ENCODE measurements at regions of chr22 and their contacts with region 1.

Region 1: GRCh38 chr22:41381329-41382097 is at the start of gene TEF:
- DNase-seq: peak; percentile 95
- ATAC-seq: peak; percentile 89
- H3K4me3 ChIP-seq: peak within 1 kb of the TSS; percentile 52 to 65
- H3K27ac ChIP-seq: peak within 1 kb of the TSS; percentile 97
- H3K4me1 ChIP-seq: peaks cover 14 to 38% of the 10 kb centered on the region in 2 experiments
- H3K27me3 ChIP-seq: no peaks in the 10 kb centered on the region
- CTCF ChIP-seq: no peak
- POLR2A ChIP-seq: peak; percentile 4
- RAD21 ChIP-seq: no peak
- total RNA-seq, gene TEF: 16.5 TPM

Region 2: GRCh38 chr22:41091132-41092022 is 290.1 kb before region 1 on chr22:
- CTCF ChIA-PET with region 1: no interaction called
- POLR2A ChIA-PET with region 1: no interaction called
- RAD21 ChIA-PET with region 1: no interaction called
- intact Hi-C with region 1: loop called (anchors 2 kb)
- DNase-seq: peak; percentile 95
- ATAC-seq: peak; percentile 92
- H3K4me3 ChIP-seq: peak overlapping the region; percentile 71 to 72
- H3K27ac ChIP-seq: peak overlapping the region; percentile 100
- H3K4me1 ChIP-seq: peaks cover 13 to 26% of the 10 kb centered on the region in 2 experiments; a peak in 3 of 4 replicates
- H3K27me3 ChIP-seq: no peaks in the 10 kb centered on the region
- CTCF ChIP-seq: no peak
- POLR2A ChIP-seq: no peak
- RAD21 ChIP-seq: peak; percentile 34; the same call in 1 of the 2 replicates

Region 3: DNA sequence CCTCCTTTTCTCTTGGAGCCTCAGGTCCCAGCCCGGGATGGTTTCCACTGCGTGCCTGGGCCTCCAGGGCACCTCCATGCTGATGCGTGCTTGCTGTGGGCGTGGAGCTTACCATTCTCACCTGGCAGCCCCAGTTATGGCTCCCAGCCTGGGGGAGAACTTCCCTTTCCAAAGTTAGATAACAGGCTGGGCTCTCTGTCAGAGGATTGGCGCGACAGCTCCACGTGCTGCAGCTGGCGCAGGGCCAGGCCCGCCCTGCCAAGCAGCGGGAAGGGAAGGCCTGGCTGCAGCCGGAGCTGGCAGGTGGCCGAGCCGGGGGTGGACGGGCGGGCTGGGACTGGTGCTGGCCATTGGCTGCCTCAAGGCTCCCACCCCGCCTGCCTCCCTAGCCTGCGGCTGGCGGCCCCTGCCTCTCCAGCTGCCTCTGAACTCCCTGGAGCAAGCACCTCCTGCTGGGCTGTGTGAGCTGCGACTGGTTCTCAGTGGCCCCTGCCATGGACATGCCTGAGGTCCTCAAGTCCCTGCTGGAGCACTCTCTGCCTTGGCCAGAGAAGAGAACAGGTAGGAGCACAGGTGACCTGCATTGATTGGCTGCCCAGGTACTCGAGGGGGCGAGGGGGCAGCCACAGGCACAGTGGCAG is 14.4 kb before region 1 on chr22:
- CTCF ChIA-PET with region 1: interaction called, 4 read pairs
- POLR2A ChIA-PET with region 1: interaction called, 16 read pairs
- RAD21 ChIA-PET with region 1: interaction called in 1 of 2 experiments, 4 read pairs
- intact Hi-C with region 1: no loop called
- DNase-seq: peak; percentile 71
- ATAC-seq: peak; percentile 93
- H3K4me3 ChIP-seq: peak overlapping the region in 1 of 2 experiments; percentile 37; a peak in 3 of 4 replicates
- H3K27ac ChIP-seq: peak overlapping the region; percentile 20; the same call in 1 of the 2 replicates
- H3K4me1 ChIP-seq: peaks cover 17 to 18% of the 10 kb centered on the region in 2 experiments
- H3K27me3 ChIP-seq: no peaks in the 10 kb centered on the region
- CTCF ChIP-seq: peak in 2 of 3 experiments; percentile 23 to 26; a peak in 1 of 6 replicates
- POLR2A ChIP-seq: no peak
- RAD21 ChIP-seq: no peak; the same call in 1 of the 2 replicates

Region 4: DNA sequence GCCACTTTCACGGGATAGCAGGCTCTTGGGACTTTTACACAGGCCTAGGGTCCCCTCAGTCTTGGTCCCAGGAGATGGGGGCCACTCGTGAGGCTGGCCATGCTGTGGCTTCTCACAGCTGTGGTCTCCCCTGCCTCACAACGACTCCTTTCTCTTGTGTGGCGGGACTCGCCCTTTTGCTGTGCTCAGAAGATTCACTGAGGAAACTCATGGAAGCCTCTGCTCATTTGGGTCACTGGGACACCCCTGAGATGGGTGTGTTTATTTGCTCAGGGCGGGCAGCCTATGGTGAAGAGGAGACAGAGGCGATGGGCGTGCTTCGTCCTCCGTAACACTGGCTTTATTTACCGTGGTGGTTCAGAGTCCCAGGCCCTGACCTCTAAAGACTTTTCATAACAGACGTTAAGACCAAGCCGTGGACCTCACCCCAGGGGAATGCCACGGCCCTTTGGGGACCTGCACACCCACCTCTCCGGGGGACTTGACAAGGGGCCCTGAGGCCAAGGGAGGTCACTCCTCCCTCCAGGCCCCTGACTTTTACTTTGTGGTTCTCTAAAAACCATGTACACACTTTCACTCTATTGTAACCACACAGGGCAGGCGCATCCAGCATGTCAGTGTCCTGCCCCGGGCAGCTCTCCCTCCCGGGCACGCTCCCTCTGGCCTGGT is 15.8 kb after region 1 on chr22:
- CTCF ChIA-PET with region 1: interaction called, 3 read pairs
- POLR2A ChIA-PET with region 1: interaction called, 14 read pairs
- RAD21 ChIA-PET with region 1: no interaction called
- intact Hi-C with region 1: no loop called
- DNase-seq: no peak
- ATAC-seq: no peak
- H3K4me3 ChIP-seq: no peak overlapping the region
- H3K27ac ChIP-seq: no peak overlapping the region
- H3K4me1 ChIP-seq: peaks cover 7 to 8% of the 10 kb centered on the region in 2 experiments
- H3K27me3 ChIP-seq: no peaks in the 10 kb centered on the region
- CTCF ChIP-seq: no peak
- POLR2A ChIP-seq: no peak
- RAD21 ChIP-seq: no peak

Region 5: GRCh38 chr22:41403532-41404318 is 22.2 kb after region 1 on chr22:
- CTCF ChIA-PET with region 1: interaction called, 11 read pairs
- POLR2A ChIA-PET with region 1: interaction called, 9 read pairs
- RAD21 ChIA-PET with region 1: interaction called in 1 of 2 experiments, 6 read pairs
- intact Hi-C with region 1: no loop called
- DNase-seq: peak; percentile 81
- ATAC-seq: peak; percentile 98
- H3K4me3 ChIP-seq: no peak overlapping the region
- H3K27ac ChIP-seq: no peak overlapping the region
- H3K4me1 ChIP-seq: peaks cover 11 to 19% of the 10 kb centered on the region in 2 experiments
- H3K27me3 ChIP-seq: no peaks in the 10 kb centered on the region
- CTCF ChIP-seq: peak; percentile 91 to 96 (median 94)
- POLR2A ChIP-seq: no peak
- RAD21 ChIP-seq: peak; percentile 99

Region 6: GRCh38 chr22:41448189-41448808 is 66.8 kb after region 1 on chr22:
- CTCF ChIA-PET with region 1: no interaction called
- POLR2A ChIA-PET with region 1: interaction called, 20 read pairs
- RAD21 ChIA-PET with region 1: no interaction called
- intact Hi-C with region 1: no loop called
- DNase-seq: peak; percentile 99
- ATAC-seq: peak; percentile 80
- H3K4me3 ChIP-seq: peak overlapping the region; percentile 93 to 94
- H3K27ac ChIP-seq: peak overlapping the region; percentile 100
- H3K4me1 ChIP-seq: peaks cover 5 to 29% of the 10 kb centered on the region in 2 experiments; a peak in 3 of 4 replicates
- H3K27me3 ChIP-seq: no peaks in the 10 kb centered on the region
- CTCF ChIP-seq: no peak
- POLR2A ChIP-seq: peak; percentile 37
- RAD21 ChIP-seq: no peak

Region 7: GRCh38 chr22:41501209-41501608 is 119.7 kb after region 1 on chr22:
- CTCF ChIA-PET with region 1: no interaction called
- POLR2A ChIA-PET with region 1: no interaction called
- RAD21 ChIA-PET with region 1: no interaction called
- intact Hi-C with region 1: no loop called
- DNase-seq: no peak
- ATAC-seq: peak; percentile 94
- H3K4me3 ChIP-seq: no peak overlapping the region
- H3K27ac ChIP-seq: no peak overlapping the region
- H3K4me1 ChIP-seq: no peaks in the 10 kb centered on the region
- H3K27me3 ChIP-seq: no peaks in the 10 kb centered on the region
- CTCF ChIP-seq: peak; percentile 18 to 48 (median 36); a peak in 5 of 6 replicates
- POLR2A ChIP-seq: no peak
- RAD21 ChIP-seq: peak; percentile 68

Region 8: DNA sequence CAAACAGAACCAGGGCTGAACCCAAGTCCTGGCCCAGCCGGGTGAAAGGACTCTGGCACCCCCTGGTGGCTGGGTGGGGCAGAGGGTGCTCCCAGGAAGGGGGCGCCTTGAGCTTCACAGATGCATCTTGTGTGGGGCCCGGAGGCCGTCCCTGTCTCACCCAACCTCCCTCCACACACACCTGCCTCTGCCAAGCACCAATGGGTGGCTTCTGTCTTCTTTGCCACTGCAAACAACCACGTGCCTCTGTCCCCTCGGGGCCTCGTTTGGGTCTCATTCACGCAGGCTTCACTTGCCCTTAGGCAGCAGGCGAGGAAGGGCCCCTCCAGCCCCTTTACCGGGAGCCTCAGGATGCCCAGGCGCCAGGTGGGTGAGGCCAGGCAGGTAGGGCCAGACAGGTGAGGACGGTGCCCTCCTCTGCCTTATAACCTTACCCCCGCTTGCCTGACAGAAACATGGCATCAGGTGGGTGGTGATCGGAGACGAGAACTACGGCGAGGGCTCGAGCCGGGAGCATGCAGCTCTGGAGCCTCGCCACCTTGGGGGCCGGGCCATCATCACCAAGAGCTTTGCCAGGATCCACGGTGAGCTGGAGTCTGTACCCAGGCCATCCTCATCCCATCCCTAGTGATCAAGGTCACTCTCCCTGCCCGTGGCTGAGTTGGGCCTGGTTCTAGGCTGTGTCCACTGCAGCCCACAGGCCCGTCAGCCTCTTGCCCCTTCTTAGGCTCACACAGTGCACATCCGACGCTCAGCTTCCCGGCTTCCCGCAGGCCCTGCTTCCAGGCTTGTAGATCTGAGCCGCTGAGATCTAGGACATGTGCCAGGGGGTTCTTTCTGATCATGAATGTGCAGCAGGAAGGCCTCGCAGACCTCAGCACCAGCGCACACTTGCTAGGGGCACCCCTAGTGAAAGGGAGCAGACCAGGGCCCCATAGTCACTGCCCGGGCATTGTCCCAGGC is 145.6 kb after region 1 on chr22:
- CTCF ChIA-PET with region 1: interaction called, 10 read pairs
- POLR2A ChIA-PET with region 1: interaction called, 9 read pairs
- RAD21 ChIA-PET with region 1: no interaction called
- intact Hi-C with region 1: no loop called
- DNase-seq: no peak
- ATAC-seq: peak; percentile 65
- H3K4me3 ChIP-seq: no peak overlapping the region
- H3K27ac ChIP-seq: peak overlapping the region; percentile 55; the same call in 1 of the 2 replicates
- H3K4me1 ChIP-seq: no peaks in the 10 kb centered on the region
- H3K27me3 ChIP-seq: no peaks in the 10 kb centered on the region
- CTCF ChIP-seq: peak; percentile 86 to 95 (median 92)
- POLR2A ChIP-seq: no peak
- RAD21 ChIP-seq: peak; percentile 72

Region 9: DNA sequence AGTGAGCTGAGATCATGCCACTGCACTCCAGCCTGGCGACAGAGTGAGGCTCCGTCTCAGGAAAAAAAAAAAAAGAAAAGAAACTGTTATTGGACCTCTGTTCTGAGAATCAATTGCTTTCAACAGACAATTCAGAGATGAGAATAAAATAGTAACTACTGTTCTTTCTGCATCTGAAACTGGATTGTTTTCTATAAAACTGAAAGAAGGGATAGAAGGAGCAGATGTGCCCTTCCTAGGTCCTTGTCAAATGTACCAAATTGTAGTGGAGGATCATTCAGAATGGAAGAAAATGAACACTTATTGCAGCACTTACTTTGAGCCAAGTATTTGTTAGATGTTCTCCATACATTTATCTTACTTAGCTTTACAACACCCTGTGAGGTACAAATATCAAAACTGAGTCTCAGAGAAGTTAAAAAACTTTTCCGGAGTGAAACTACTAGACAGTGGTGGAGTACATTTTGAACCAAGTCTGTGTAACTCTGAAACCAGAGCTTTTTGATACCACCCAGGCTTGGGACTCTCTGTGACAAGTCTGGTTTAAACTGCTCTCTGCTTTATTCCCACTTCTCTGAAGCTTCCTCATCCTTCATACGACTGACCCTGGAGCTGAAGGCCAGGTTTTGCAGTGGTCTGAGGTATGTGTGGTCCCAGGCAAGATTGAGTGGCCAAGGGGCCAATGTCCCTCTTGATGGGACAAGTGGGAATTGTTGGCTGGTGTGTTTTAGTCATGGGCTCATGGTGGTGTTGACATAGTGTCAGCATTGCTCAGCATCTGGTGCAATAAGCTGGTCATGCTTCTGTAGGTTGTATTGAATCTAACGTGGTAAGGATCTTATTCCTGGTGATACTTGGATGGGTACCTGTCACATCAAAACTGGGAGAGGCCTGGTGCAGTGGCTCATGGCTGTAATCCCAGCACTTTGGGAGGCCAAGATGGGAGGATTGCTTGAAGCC is 370.8 kb after region 1 on chr22:
- CTCF ChIA-PET with region 1: no interaction called
- POLR2A ChIA-PET with region 1: no interaction called
- RAD21 ChIA-PET with region 1: no interaction called
- intact Hi-C with region 1: no loop called
- DNase-seq: no peak
- ATAC-seq: no peak
- H3K4me3 ChIP-seq: no peak overlapping the region
- H3K27ac ChIP-seq: no peak overlapping the region
- H3K4me1 ChIP-seq: no peaks in the 10 kb centered on the region; a peak in 1 of 4 replicates
- H3K27me3 ChIP-seq: no peaks in the 10 kb centered on the region
- CTCF ChIP-seq: no peak
- POLR2A ChIP-seq: no peak
- RAD21 ChIP-seq: no peak

Region 10: GRCh38 chr22:41876275-41876674 is 494.8 kb after region 1 on chr22:
- CTCF ChIA-PET with region 1: no interaction called
- POLR2A ChIA-PET with region 1: no interaction called
- RAD21 ChIA-PET with region 1: no interaction called
- intact Hi-C with region 1: no loop called
- DNase-seq: no peak
- ATAC-seq: no peak
- H3K4me3 ChIP-seq: no peak overlapping the region
- H3K27ac ChIP-seq: no peak overlapping the region
- H3K4me1 ChIP-seq: no peaks in the 10 kb centered on the region
- H3K27me3 ChIP-seq: no peaks in the 10 kb centered on the region
- CTCF ChIP-seq: no peak
- POLR2A ChIP-seq: no peak
- RAD21 ChIP-seq: no peak